ENCODE measurements at regions of chrX and their contacts with region 1.

Region 1: DNA sequence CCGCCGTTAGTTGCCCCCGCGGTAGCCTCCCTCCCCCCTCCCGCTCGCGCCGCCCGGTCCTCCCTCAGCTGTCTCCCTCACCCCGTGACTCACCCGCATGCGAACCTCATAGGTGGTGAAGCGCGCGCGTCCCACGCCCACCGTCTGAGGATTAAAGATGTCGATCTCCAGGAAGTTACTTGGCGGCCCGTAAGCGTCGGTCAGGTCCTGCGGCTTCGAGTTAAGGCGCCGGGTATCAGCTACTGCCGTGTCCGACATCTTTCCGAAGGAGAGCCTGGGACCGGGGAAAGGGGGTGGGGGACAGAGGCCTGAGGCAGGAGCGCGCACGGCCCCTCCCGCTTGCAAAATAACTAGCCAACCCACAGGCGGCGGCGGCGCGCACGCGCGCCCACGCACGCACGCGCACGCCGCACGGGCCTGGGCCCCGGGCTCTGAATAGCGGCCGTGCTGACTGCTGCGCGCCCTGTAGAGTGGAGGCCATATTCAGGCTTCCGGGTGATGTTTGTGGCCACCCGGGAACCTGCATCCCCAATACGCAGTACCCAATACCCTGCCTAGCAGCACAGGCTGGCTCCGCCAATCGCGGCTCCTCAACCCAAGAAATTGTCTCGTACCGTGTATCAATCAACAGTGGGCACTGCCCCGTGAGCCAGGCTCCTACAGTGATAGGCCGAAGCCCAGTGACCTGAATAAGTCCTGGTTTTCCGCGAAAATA is at the start of gene SNX12:
- DNase-seq: peak in 1 of 2 donors; percentile 94
- H3K4me3 ChIP-seq: peak within 1 kb of the TSS; percentile 54 to 62
- H3K27ac ChIP-seq: peak within 1 kb of the TSS; percentile 79
- H3K4me1 ChIP-seq: peaks cover 14% of the 10 kb centered on the region
- H3K27me3 ChIP-seq: no peaks in the 10 kb centered on the region
- CTCF ChIP-seq: peak in 2 of 3 experiments; percentile 55 to 76
- POLR2A ChIP-seq: no peak
- total RNA-seq, gene SNX12: 25.0 TPM

Region 2: DNA sequence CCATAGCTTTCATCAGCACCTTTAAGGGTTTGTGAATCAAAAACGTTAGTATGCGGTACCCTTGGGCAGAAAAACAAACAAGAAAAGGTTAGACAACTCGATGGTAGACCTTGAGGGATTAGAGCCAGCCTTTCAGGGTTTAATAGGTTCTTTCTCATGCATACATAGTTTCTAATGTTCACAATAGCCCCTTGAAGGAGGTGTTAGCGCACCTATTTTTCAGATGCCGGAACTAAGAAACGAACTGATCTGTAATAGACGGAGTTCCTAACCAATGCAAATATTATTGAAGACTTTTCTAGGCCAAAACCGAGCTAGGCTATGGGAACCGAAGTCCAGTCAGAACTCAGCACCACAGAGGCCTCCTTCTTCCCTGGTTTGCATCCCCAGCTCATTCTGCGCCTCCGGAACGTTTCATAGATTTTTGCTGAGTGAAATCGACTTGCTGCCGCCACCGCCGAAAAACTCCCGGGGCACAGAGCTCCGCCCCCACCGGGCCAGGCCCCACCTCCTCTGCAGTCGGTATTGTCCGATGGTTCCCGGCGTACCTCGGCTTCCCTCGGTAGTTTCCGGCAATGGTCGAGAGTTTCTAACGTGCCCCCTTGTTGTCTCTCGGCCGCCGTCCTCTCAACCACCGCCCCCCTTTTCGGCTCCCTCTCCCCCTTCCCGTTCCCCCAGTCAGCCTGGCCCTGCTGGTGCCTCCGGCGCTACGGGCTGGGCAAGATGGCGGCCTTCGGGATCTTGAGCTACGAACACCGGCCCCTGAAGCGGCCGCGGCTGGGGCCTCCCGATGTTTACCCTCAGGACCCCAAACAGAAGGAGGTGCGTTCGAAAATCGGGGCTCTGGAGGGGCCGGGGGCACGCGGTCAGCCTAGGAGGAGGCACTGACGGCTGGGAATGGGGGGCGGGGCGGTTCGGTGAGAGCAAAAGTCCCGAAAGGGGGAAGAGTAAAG is 50.1 kb after region 1 on chrX and contains the start of gene MED12:
- intact Hi-C with region 1: no loop called
- DNase-seq: no peak
- H3K4me3 ChIP-seq: peak within 1 kb of the TSS; percentile 54 to 56
- H3K27ac ChIP-seq: peak within 1 kb of the TSS; percentile 71
- H3K4me1 ChIP-seq: peaks cover 16% of the 10 kb centered on the region
- H3K27me3 ChIP-seq: no peaks in the 10 kb centered on the region
- CTCF ChIP-seq: no peak
- POLR2A ChIP-seq: peak in 1 of 2 donors; percentile 6
- total RNA-seq, gene MED12: 39.3 TPM

Region 3: DNA sequence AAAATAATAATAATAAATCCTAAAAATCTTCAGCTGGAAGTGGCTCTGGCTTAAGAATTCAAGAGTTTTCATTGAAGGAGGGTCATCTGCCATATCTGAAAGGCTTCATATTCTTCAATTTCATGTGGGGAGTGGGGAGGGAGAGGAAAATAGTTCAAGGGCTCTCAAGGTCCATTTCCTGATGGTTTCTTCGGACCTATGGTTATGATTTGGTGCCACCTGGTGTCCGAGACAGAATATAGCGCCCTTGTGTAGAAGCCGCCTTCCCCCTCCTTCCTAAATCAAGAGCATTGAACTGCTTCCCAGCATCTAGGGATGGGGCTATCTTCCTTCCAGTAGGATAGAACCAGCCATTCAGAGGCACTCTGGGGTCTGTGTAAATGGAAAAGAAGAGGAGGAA is 110.7 kb after region 1 on chrX:
- intact Hi-C with region 1: loop called (anchors 10 kb)
- DNase-seq: no peak
- H3K4me3 ChIP-seq: no peak overlapping the region
- H3K27ac ChIP-seq: no peak overlapping the region
- H3K4me1 ChIP-seq: no peaks in the 10 kb centered on the region
- H3K27me3 ChIP-seq: no peaks in the 10 kb centered on the region
- CTCF ChIP-seq: peak; percentile 44 to 68 (median 61)
- POLR2A ChIP-seq: no peak